ENCODE measurements at regions of chr16 and their contacts with region 1.

Region 1: DNA sequence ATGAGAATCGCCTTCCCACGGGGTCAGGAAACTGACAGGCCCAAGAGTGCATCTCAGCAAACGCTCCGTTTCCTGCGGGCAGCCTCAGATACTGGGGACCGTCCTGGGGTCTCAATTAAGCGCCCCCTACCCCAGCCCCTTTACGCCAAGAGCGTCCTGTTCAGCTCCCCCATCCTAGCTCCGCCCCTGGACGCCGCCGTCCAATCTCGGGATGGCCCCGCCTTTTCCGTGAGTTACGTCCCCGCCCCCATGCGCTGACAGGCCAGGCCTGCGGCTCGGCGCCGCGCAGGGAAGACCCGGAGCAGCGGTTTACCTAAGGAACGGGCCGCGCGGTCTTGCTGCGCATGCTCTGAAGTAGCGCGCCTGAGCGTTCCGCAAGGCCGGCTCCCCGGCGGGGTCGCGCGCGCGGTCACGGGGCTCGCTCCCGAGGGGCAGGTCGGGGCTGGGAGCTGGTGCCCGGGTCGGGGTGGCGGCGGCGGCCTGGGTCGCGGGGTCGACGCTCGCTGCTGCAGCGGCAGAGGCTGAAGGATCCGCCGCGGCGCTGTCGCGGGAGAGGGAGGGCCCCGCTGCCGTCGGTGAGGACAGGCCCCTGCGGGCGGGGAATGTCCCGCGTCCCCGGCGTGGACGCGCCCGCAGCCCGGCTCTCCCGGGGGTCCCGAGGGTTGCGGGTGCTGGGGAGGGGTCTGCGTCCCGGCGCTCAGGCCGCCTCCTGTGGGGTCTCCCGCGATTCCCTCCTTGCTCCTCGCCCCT is at the start of gene FLYWCH1:
- DNase-seq: peak; percentile 94 to 99 (median 97)
- ATAC-seq: peak; percentile 99
- H3K4me3 ChIP-seq: peak within 1 kb of the TSS; percentile 85
- H3K4me3 Mint-ChIP-seq: peak within 1 kb of the TSS; percentile 80 to 97 (median 92)
- H3K27ac ChIP-seq: peak within 1 kb of the TSS; percentile 78
- H3K27ac Mint-ChIP-seq: peak within 1 kb of the TSS; percentile 80 to 96 (median 87)
- H3K4me1 ChIP-seq: peaks cover 7 to 8% of the 10 kb centered on the region in 2 donors
- H3K4me1 Mint-ChIP-seq: peaks cover 11 to 39% (median 30%) of the 10 kb centered on the region in 7 donors
- H3K27me3 ChIP-seq: no peaks in the 10 kb centered on the region
- H3K27me3 Mint-ChIP-seq: peaks cover 0 to 10% (median 0%) of the 10 kb centered on the region in 5 donors
- total RNA-seq, gene FLYWCH1: 48.6 to 149 (median 87.0) TPM

Region 2: GRCh38 chr16:2692948-2693651 is 218.7 kb before region 1 on chr16:
- CTCF ChIA-PET with region 1: no interaction called
- POLR2A ChIA-PET with region 1: no interaction called
- intact Hi-C with region 1: no loop called
- DNase-seq: no peak
- ATAC-seq: peak; percentile 28
- H3K4me3 ChIP-seq: no peak overlapping the region
- H3K4me3 Mint-ChIP-seq: no peak overlapping the region
- H3K27ac ChIP-seq: no peak overlapping the region
- H3K27ac Mint-ChIP-seq: peak overlapping the region in 1 of 9 donors; percentile 38
- H3K4me1 ChIP-seq: no peaks in the 10 kb centered on the region
- H3K4me1 Mint-ChIP-seq: peaks cover 0 to 17% (median 7%) of the 10 kb centered on the region in 7 donors
- H3K27me3 ChIP-seq: no peaks in the 10 kb centered on the region
- H3K27me3 Mint-ChIP-seq: no peaks in the 10 kb centered on the region

Region 3: GRCh38 chr16:2883027-2883851 is 28.5 kb before region 1 on chr16 and contains the start of gene FLYWCH2:
- CTCF ChIA-PET with region 1: interaction called, 8 read pairs
- POLR2A ChIA-PET with region 1: interaction called, 37 read pairs
- intact Hi-C with region 1: loop called in 1 of 2 experiments (anchors 1 kb)
- DNase-seq: peak; percentile 98 to 100 (median 100)
- ATAC-seq: peak; percentile 89
- H3K4me3 ChIP-seq: peak within 1 kb of the TSS; percentile 69
- H3K4me3 Mint-ChIP-seq: peak within 1 kb of the TSS; percentile 90 to 97 (median 94)
- H3K27ac ChIP-seq: peak within 1 kb of the TSS; percentile 84
- H3K27ac Mint-ChIP-seq: peak within 1 kb of the TSS; percentile 93 to 99 (median 97)
- H3K4me1 ChIP-seq: peaks cover 6% of the 10 kb centered on the region in 2 donors
- H3K4me1 Mint-ChIP-seq: peaks cover 0 to 18% (median 13%) of the 10 kb centered on the region in 7 donors
- H3K27me3 ChIP-seq: no peaks in the 10 kb centered on the region
- H3K27me3 Mint-ChIP-seq: no peaks in the 10 kb centered on the region
- total RNA-seq, gene FLYWCH2: 13.6 to 30.4 (median 24.0) TPM

Region 4: GRCh38 chr16:2948807-2949738 is 37.3 kb after region 1 on chr16:
- CTCF ChIA-PET with region 1: no interaction called
- POLR2A ChIA-PET with region 1: no interaction called
- intact Hi-C with region 1: no loop called
- DNase-seq: no peak
- ATAC-seq: no peak
- H3K4me3 ChIP-seq: no peak overlapping the region
- H3K4me3 Mint-ChIP-seq: no peak overlapping the region
- H3K27ac ChIP-seq: no peak overlapping the region
- H3K27ac Mint-ChIP-seq: no peak overlapping the region
- H3K4me1 ChIP-seq: no peaks in the 10 kb centered on the region
- H3K4me1 Mint-ChIP-seq: no peaks in the 10 kb centered on the region
- H3K27me3 ChIP-seq: no peaks in the 10 kb centered on the region
- H3K27me3 Mint-ChIP-seq: no peaks in the 10 kb centered on the region

Measured in naive thymus-derived CD4-positive, alpha-beta T cell (primary cell).